A673 (cell line): ENCODE measurements at regions of chr10 and their contacts with region 1.

Region 1: DNA sequence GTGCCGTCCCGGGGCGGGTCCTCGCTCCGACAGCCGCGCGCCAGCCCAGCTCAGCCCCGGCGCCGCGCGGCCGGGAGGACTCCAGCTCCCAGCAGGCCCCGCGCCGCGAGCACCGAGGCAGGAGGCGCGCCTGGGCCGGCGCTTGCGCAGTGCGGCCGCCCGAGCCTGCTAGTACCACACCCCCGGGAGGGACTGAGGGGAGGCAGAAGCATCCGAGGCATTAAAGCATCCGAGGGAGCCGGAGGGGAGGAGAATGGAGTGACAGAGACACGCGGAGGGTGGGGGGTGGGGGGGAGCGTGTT is at the start of gene GRK5:
- DNase-seq: peak; percentile 99
- H3K4me3 ChIP-seq: peak within 1 kb of the TSS; percentile 70
- H3K27ac ChIP-seq: peak within 1 kb of the TSS; percentile 95
- H3K4me1 ChIP-seq: peaks cover 49% of the 10 kb centered on the region
- H3K27me3 ChIP-seq: no peaks in the 10 kb centered on the region
- CTCF ChIP-seq: no peak
- total RNA-seq, gene GRK5: 54.7 and 58.2 TPM in 2 replicates

Region 2: DNA sequence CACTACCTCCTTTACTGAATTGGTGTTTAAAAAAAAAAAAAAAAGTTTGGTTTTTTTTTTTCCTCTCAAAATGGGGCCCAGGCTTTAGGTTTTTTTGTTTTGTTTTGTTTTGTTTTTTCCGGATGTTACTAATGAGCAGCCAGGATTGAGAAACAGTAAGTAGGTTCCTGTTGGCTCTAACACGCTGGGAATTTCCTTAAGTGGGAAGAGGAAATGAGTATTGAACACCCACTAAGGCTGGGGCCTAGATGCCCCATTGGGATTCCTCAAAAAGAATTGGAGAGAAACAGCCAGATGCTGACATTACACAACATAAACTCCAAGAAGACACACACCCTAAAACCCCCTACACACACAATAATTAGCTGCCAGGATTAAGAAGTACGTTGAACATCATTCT is 280.0 kb before region 1 on chr10:
- CTCF ChIA-PET with region 1: no interaction called
- POLR2A ChIA-PET with region 1: no interaction called
- intact Hi-C with region 1: no loop called
- DNase-seq: peak; percentile 47
- H3K4me3 ChIP-seq: no peak overlapping the region
- H3K27ac ChIP-seq: no peak overlapping the region
- H3K4me1 ChIP-seq: no peaks in the 10 kb centered on the region
- H3K27me3 ChIP-seq: peaks cover 2% of the 10 kb centered on the region
- CTCF ChIP-seq: no peak

Region 3: GRCh38 chr10:119165171-119166110 is 41.9 kb before region 1 on chr10 and contains the start of gene SFXN4:
- CTCF ChIA-PET with region 1: interaction called, 16 read pairs
- POLR2A ChIA-PET with region 1: no interaction called
- intact Hi-C with region 1: no loop called
- DNase-seq: peak; percentile 82
- H3K4me3 ChIP-seq: peak within 1 kb of the TSS; percentile 96
- H3K27ac ChIP-seq: peak within 1 kb of the TSS; percentile 93
- H3K4me1 ChIP-seq: peaks cover 17% of the 10 kb centered on the region
- H3K27me3 ChIP-seq: no peaks in the 10 kb centered on the region
- CTCF ChIP-seq: no peak
- total RNA-seq, gene SFXN4: 67.3 and 72.9 TPM in 2 replicates

Region 4: GRCh38 chr10:119333146-119333792 is 126.0 kb after region 1 on chr10:
- CTCF ChIA-PET with region 1: no interaction called
- POLR2A ChIA-PET with region 1: interaction called, 6 read pairs
- intact Hi-C with region 1: loop called (anchors 5 kb)
- DNase-seq: peak; percentile 40
- H3K4me3 ChIP-seq: no peak overlapping the region
- H3K27ac ChIP-seq: peak overlapping the region; percentile 63
- H3K4me1 ChIP-seq: peaks cover 38% of the 10 kb centered on the region
- H3K27me3 ChIP-seq: no peaks in the 10 kb centered on the region
- CTCF ChIP-seq: no peak

Region 5: GRCh38 chr10:119445311-119445934 is 238.1 kb after region 1 on chr10:
- CTCF ChIA-PET with region 1: interaction called, 25 read pairs
- POLR2A ChIA-PET with region 1: no interaction called
- intact Hi-C with region 1: no loop called
- DNase-seq: peak; percentile 78
- H3K4me3 ChIP-seq: no peak overlapping the region
- H3K27ac ChIP-seq: no peak overlapping the region
- H3K4me1 ChIP-seq: no peaks in the 10 kb centered on the region
- H3K27me3 ChIP-seq: no peaks in the 10 kb centered on the region
- CTCF ChIP-seq: peak; percentile 93

Region 6: GRCh38 chr10:119542988-119543813 is 335.9 kb after region 1 on chr10:
- CTCF ChIA-PET with region 1: no interaction called
- POLR2A ChIA-PET with region 1: interaction called, 4 read pairs
- intact Hi-C with region 1: loop called (anchors 5 kb)
- DNase-seq: peak; percentile 77
- H3K4me3 ChIP-seq: peak overlapping the region; percentile 67
- H3K27ac ChIP-seq: peak overlapping the region; percentile 77
- H3K4me1 ChIP-seq: peaks cover 42% of the 10 kb centered on the region
- H3K27me3 ChIP-seq: no peaks in the 10 kb centered on the region
- CTCF ChIP-seq: peak; percentile 62